ENCODE measurements at regions of chr3 and their contacts with region 1.

Region 1: GRCh38 chr3:3200632-3201212 is 21.2 kb upstream of the CRBN start:
- DNase-seq: peak; percentile 45 to 67 (median 58)
- ATAC-seq: peak; percentile 74
- H3K4me3 ChIP-seq: no peak overlapping the region
- H3K27ac ChIP-seq: no peak overlapping the region
- H3K4me1 ChIP-seq: peaks cover 6% of the 10 kb centered on the region
- H3K27me3 ChIP-seq: no peaks in the 10 kb centered on the region
- CTCF ChIP-seq: peak; percentile 45 to 86 (median 82)
- POLR2A ChIP-seq: no peak

Region 2: GRCh38 chr3:4284865-4285264 is 1084.1 kb after region 1 on chr3:
- intact Hi-C with region 1: loop called (anchors 5 kb)
- DNase-seq: no peak
- ATAC-seq: no peak
- H3K4me3 ChIP-seq: no peak overlapping the region
- H3K27ac ChIP-seq: no peak overlapping the region
- H3K4me1 ChIP-seq: no peaks in the 10 kb centered on the region
- H3K27me3 ChIP-seq: no peaks in the 10 kb centered on the region
- CTCF ChIP-seq: no peak
- POLR2A ChIP-seq: no peak

Measured in body of pancreas (tissue), 4 donors.